Endothelial cell of umbilical vein (primary cell): ENCODE measurements at regions of chr2 and their contacts with region 1.

Region 1: DNA sequence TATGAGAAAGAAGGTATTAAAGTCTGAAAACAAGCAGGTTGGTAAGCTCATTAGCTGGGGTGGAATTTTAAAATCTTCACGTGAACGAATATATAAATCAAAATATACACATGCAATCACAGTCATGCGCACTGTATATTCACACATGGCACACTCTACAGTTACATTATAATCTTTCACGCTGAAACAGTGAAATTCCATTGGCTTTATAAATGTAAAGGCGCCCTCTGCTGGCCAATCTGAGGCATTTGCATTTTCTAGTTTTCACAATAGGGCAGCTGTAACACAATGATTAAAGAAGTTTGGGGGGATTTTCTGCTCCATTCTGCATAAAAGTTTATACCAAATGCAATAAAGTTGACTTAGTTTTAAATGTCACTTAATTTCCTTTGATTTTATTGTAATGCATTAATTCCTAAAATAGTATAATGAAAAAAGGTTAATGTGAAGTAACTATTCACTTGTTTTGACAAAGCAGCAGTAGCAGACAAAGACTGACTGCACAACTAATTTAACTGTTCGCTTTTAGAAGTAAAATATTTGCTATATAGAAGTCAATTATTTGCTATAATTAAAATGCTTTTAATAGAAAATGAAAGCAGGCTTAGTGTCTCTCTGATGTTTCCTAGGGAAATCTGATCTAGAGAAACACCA is 17.2 kb downstream of the IFIH1 start:
- DNase-seq: peak; percentile 63
- H3K4me3 ChIP-seq: no peak overlapping the region
- H3K27ac ChIP-seq: no peak overlapping the region
- H3K4me1 ChIP-seq: no peaks in the 10 kb centered on the region
- H3K27me3 ChIP-seq: no peaks in the 10 kb centered on the region
- CTCF ChIP-seq: peak; percentile 62 to 64
- POLR2A ChIP-seq: no peak

Region 2: GRCh38 chr2:161992526-161992925 is 308.8 kb before region 1 on chr2:
- CTCF ChIA-PET with region 1: interaction called, 10 read pairs
- POLR2A ChIA-PET with region 1: no interaction called
- dilution Hi-C with region 1: no loop called
- intact Hi-C with region 1: no loop called
- DNase-seq: no peak
- H3K4me3 ChIP-seq: no peak overlapping the region
- H3K27ac ChIP-seq: no peak overlapping the region
- H3K4me1 ChIP-seq: no peaks in the 10 kb centered on the region
- H3K27me3 ChIP-seq: no peaks in the 10 kb centered on the region
- CTCF ChIP-seq: no peak
- POLR2A ChIP-seq: no peak

Region 3: DNA sequence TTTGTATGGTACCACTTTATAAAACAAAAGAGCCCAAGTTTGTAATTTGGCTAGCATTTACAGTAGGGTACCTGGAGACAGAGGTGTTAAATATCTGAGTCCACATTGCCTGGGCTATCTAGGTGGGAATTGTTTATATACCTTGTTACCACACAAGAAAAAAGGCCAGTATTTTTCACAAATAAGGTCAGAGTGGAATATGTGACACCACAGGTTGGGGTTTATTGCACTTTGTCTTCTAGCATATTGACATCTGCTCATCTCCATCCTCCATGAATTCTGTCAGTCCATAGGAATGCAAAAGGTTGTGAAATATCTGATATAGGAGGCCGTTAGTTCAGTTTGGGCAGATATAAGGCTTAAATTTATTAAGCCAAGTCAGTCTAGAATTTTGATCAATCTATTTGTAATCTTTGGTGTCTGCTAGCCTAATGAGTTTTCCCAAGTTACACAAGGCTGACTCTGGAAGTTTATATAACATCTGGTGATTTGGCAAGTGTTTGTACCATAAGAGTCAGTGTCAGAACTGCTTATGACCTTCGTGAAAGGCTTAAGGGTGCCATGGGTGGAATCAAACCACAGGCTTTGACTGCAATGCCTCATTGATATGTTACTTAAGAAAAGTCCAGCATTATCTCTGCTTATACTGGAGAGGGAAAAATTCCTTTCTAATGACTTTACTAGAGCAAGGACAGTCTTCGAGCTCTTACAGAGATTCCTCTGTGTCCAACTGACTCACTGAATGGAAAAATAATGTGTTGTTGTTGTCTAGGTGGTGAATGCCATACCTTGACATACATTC is 216.0 kb before region 1 on chr2:
- CTCF ChIA-PET with region 1: no interaction called
- POLR2A ChIA-PET with region 1: no interaction called
- dilution Hi-C with region 1: no loop called
- intact Hi-C with region 1: no loop called
- DNase-seq: no peak
- H3K4me3 ChIP-seq: no peak overlapping the region
- H3K27ac ChIP-seq: no peak overlapping the region
- H3K4me1 ChIP-seq: peaks cover 7% of the 10 kb centered on the region
- H3K27me3 ChIP-seq: no peaks in the 10 kb centered on the region
- CTCF ChIP-seq: no peak
- POLR2A ChIP-seq: no peak

Region 4: GRCh38 chr2:162143969-162144368 is 157.3 kb before region 1 on chr2:
- CTCF ChIA-PET with region 1: interaction called, 42 read pairs
- POLR2A ChIA-PET with region 1: no interaction called
- dilution Hi-C with region 1: no loop called
- intact Hi-C with region 1: no loop called
- DNase-seq: no peak
- H3K4me3 ChIP-seq: no peak overlapping the region
- H3K27ac ChIP-seq: no peak overlapping the region
- H3K4me1 ChIP-seq: no peaks in the 10 kb centered on the region
- H3K27me3 ChIP-seq: peaks cover 5 to 7% of the 10 kb centered on the region in 2 experiments
- CTCF ChIP-seq: no peak
- POLR2A ChIP-seq: no peak

Region 5: DNA sequence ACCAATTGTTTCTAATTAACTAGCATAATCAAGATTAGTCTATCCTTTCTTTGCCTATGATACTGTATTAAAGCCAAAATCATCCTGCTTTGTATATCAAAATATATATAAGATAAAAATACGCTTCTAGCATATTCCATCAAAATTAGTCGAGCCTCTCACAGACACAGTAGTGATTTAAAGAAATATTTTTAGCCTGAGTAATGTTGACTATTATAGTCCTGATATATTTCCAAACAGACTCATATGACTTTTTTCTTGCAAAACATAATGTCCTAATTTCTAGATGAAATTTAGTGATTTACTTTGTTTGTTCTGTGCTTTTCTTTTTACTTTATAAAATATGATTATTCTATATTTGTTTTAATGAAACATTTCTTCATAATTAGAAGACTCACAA is 88.9 kb before region 1 on chr2:
- CTCF ChIA-PET with region 1: interaction called, 1,052 read pairs
- POLR2A ChIA-PET with region 1: no interaction called
- dilution Hi-C with region 1: no loop called
- intact Hi-C with region 1: no loop called
- DNase-seq: no peak
- H3K4me3 ChIP-seq: no peak overlapping the region
- H3K27ac ChIP-seq: no peak overlapping the region
- H3K4me1 ChIP-seq: no peaks in the 10 kb centered on the region
- H3K27me3 ChIP-seq: no peaks in the 10 kb centered on the region
- CTCF ChIP-seq: no peak
- POLR2A ChIP-seq: no peak

Region 6: DNA sequence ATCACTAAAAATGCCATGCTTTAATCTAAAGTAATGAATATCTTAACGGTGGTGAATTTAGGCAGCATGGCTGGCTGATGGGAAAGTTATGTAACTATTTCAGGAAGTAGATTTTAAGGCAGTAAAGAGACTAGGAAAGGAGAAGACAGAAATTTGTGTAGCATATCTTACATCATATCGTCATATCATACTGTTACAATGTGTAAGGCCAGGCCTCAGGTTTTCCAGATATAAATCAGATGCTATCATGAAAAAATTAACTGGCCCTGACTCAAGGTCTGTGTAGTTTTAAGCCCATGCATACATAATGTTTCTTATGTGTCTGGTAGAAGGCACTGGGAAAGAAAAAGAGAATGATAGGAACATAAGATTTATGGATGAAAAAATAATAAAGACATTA is 49.1 kb before region 1 on chr2:
- CTCF ChIA-PET with region 1: interaction called, 12 read pairs
- POLR2A ChIA-PET with region 1: no interaction called
- dilution Hi-C with region 1: no loop called
- intact Hi-C with region 1: no loop called
- DNase-seq: no peak
- H3K4me3 ChIP-seq: no peak overlapping the region
- H3K27ac ChIP-seq: no peak overlapping the region
- H3K4me1 ChIP-seq: no peaks in the 10 kb centered on the region
- H3K27me3 ChIP-seq: no peaks in the 10 kb centered on the region
- CTCF ChIP-seq: no peak
- POLR2A ChIP-seq: no peak

Region 7: GRCh38 chr2:162282765-162283425 is 18.4 kb before region 1 on chr2:
- CTCF ChIA-PET with region 1: interaction called, 46 read pairs
- POLR2A ChIA-PET with region 1: no interaction called
- dilution Hi-C with region 1: no loop called
- intact Hi-C with region 1: no loop called
- DNase-seq: no peak
- H3K4me3 ChIP-seq: no peak overlapping the region
- H3K27ac ChIP-seq: no peak overlapping the region
- H3K4me1 ChIP-seq: no peaks in the 10 kb centered on the region
- H3K27me3 ChIP-seq: no peaks in the 10 kb centered on the region
- CTCF ChIP-seq: no peak
- POLR2A ChIP-seq: no peak

Region 8: DNA sequence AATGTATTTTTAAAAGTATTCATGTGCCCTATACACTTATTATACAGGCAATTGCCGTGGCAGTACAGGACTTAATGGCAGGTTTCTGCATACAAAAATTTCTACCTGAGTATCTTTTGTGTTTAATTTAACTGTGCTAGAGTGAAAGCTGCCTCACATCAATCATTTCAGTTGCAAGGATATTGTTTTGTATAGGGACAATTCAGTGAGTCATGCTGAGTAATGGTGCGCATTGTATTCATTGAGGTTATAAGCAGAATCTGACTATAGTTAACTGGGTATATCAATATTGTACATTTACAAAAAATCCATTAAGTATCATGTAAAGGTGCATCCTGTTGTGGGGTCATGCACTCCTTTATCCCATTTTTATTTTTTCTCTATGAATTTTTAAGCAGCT is 164.2 kb after region 1 on chr2:
- CTCF ChIA-PET with region 1: no interaction called
- POLR2A ChIA-PET with region 1: no interaction called
- dilution Hi-C with region 1: no loop called
- intact Hi-C with region 1: no loop called
- DNase-seq: peak; percentile 11
- H3K4me3 ChIP-seq: no peak overlapping the region
- H3K27ac ChIP-seq: no peak overlapping the region
- H3K4me1 ChIP-seq: no peaks in the 10 kb centered on the region
- H3K27me3 ChIP-seq: no peaks in the 10 kb centered on the region
- CTCF ChIP-seq: no peak
- POLR2A ChIP-seq: no peak